Right lobe of liver (tissue), 6 donors: ENCODE measurements at regions of chr13 and their contacts with region 1.

Region 1: DNA sequence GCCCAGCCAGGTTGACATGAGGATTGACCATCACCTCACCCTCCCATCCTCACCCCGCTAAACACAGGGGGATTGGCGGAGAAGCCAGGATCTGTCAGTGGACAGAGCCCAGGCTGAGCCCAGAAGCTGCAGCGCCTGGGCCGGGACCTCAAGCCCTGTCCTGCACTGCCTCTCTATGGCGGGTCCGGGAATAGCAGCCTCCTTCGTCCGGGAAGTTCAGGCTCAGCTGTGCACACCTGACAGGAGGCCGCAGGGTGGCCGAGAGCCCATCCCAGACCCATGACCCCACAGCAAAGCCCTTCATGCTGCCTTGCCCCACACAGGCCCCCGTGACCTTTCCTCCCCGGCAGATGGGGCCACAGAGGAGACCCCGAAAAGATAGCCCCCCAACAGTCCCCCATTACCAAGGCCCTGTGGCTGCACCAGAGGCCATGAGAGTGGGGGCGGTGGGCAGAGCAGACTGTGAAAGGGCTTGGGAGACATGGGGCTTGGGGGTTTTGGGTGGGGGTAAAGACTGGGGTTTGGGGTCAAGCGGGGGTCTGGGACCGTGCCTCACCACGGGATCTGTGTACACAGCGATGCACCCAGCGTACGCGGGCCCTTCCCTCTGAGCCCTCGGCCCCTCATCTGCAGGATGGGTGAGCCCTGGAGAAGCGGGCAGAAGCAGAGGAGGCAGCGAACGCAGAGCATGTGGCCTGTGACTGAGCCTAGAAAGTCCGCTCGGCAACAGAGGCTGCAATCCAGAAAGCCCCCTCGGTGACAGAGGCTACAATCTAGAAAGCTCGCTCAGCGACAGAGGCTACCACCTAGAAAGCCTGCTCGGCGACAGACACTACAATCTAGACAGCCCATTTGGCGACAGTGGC is 68.1 kb downstream of the SPACA7 start:
- DNase-seq: peak; percentile 72 to 74 (median 74)
- ATAC-seq: peak; percentile 90 to 97 (median 95)
- H3K4me3 ChIP-seq: no peak overlapping the region
- H3K27ac ChIP-seq: no peak overlapping the region
- H3K4me1 ChIP-seq: no peaks in the 10 kb centered on the region
- H3K27me3 ChIP-seq: no peaks in the 10 kb centered on the region
- CTCF ChIP-seq: peak; percentile 74 to 94 (median 84)
- POLR2A ChIP-seq: no peak

Region 2: GRCh38 chr13:111460548-111461444 is 983.4 kb before region 1 on chr13:
- intact Hi-C with region 1: loop called in 1 of 2 experiments (anchors 10 kb)
- DNase-seq: no peak
- ATAC-seq: peak; percentile 59 to 84 (median 69)
- H3K4me3 ChIP-seq: no peak overlapping the region
- H3K27ac ChIP-seq: no peak overlapping the region
- H3K4me1 ChIP-seq: no peaks in the 10 kb centered on the region
- H3K27me3 ChIP-seq: no peaks in the 10 kb centered on the region
- CTCF ChIP-seq: peak; percentile 11 to 47 (median 28)
- POLR2A ChIP-seq: no peak

Region 3: DNA sequence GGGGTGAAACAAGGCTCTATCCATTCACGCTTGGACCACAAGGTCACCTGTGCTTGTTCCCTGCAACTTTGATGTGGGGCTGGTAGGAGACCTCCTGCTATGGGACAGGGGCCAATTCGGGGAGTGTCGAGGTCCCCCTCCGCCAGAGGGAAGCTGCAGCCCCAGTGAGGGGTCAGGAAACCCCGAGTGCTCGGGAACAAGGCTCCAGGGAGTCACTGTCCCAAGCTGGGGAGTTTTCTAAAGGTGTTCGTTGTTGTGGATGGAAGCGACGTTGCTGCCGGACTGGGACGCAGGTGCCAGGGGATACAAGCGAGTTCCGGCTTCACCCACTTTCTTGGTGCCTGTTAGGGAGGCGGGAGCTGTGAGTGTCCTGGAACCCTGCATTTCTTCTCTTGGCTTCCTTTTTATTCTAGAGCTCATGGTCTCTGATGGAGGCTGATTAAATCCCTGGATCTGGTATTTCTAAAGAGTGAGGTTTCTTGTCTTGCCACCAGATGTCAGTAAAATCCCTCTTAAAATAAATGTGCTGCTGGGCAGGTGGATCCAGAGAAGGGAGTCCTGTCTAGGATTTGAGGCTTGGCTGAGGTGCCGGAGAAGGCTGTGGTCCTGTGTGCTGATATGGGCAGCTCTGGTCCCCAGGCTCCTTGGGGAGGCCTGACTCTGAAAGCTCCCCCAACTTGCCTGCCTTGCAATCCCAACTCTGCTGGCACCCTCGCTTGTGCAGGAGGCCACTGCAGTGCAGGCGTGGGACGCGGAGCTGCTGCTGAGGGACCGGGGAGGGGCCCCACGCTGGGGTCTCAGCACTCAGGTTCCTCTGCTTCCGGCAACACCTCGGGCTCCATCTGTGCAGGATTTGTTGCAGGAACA is 969.9 kb before region 1 on chr13:
- intact Hi-C with region 1: loop called (anchors 5 to 10 kb)
- DNase-seq: peak in 1 of 3 donors; percentile 44
- ATAC-seq: peak; percentile 77 to 84 (median 82)
- H3K4me3 ChIP-seq: no peak overlapping the region
- H3K27ac ChIP-seq: no peak overlapping the region
- H3K4me1 ChIP-seq: no peaks in the 10 kb centered on the region
- H3K27me3 ChIP-seq: no peaks in the 10 kb centered on the region
- CTCF ChIP-seq: peak; percentile 42 to 69 (median 57)
- POLR2A ChIP-seq: no peak

Region 4: GRCh38 chr13:111954661-111955406 is 489.4 kb before region 1 on chr13:
- intact Hi-C with region 1: no loop called
- DNase-seq: no peak
- ATAC-seq: no peak
- H3K4me3 ChIP-seq: no peak overlapping the region
- H3K27ac ChIP-seq: no peak overlapping the region
- H3K4me1 ChIP-seq: no peaks in the 10 kb centered on the region
- H3K27me3 ChIP-seq: no peaks in the 10 kb centered on the region
- CTCF ChIP-seq: no peak
- POLR2A ChIP-seq: no peak